Endothelial cell of umbilical vein (primary cell): ENCODE measurements at regions of chr12 and their contacts with region 1.

Region 1: GRCh38 chr12:46915082-46915481 is 89.3 kb upstream of the SLC38A4 start:
- DNase-seq: no peak
- H3K4me3 ChIP-seq: no peak overlapping the region
- H3K27ac ChIP-seq: no peak overlapping the region
- H3K4me1 ChIP-seq: no peaks in the 10 kb centered on the region
- H3K27me3 ChIP-seq: peaks cover 2 to 4% of the 10 kb centered on the region in 2 experiments
- CTCF ChIP-seq: no peak
- POLR2A ChIP-seq: no peak

Region 2: DNA sequence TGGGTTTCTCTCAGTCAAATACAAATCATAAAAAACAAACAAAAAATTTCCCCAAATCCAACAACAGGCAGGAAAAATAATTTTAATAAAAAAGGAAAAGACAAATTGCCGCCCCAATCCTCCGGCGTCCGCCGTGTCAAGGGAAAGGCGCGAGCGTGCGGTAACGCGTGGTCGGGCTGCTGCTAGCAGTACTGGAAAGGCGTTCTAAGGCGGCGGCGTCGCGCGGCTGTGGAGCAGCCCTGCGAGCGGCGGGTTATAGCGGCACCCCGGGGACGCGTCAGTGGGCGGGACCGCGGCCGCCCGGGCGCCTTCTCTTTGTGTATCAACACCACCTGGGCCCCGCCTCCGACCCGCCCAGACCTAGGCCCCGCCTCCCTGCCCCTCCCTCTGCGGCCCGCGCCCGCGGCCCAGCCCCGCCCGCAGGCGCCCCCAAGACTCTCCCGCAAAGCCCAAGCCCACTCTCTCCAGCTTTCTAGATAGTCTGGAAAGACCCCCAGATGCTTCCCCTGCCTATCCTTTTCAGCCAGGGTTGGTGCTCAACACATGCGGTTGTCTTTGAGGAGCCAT is 542.5 kb before region 1 on chr12 and contains the start of gene SLC38A2:
- CTCF ChIA-PET with region 1: no interaction called
- POLR2A ChIA-PET with region 1: no interaction called
- dilution Hi-C with region 1: no loop called
- intact Hi-C with region 1: no loop called
- DNase-seq: peak; percentile 93
- H3K4me3 ChIP-seq: peak within 1 kb of the TSS; percentile 90 to 98 (median 91)
- H3K27ac ChIP-seq: peak within 1 kb of the TSS; percentile 96
- H3K4me1 ChIP-seq: peaks cover 29% of the 10 kb centered on the region
- H3K27me3 ChIP-seq: no peaks in the 10 kb centered on the region
- CTCF ChIP-seq: no peak
- POLR2A ChIP-seq: peak; percentile 100
- total RNA-seq, gene SLC38A2: 427 and 459 TPM in 2 replicates

Region 3: GRCh38 chr12:46895726-46896125 is 19.4 kb before region 1 on chr12:
- CTCF ChIA-PET with region 1: no interaction called
- POLR2A ChIA-PET with region 1: no interaction called
- dilution Hi-C with region 1: no loop called
- intact Hi-C with region 1: loop called (anchors 1 kb)
- DNase-seq: no peak
- H3K4me3 ChIP-seq: no peak overlapping the region
- H3K27ac ChIP-seq: no peak overlapping the region
- H3K4me1 ChIP-seq: no peaks in the 10 kb centered on the region
- H3K27me3 ChIP-seq: peaks cover 2 to 5% of the 10 kb centered on the region in 2 experiments
- CTCF ChIP-seq: no peak
- POLR2A ChIP-seq: no peak